A673 (cell line): ENCODE measurements at regions of chr6 and their contacts with region 1.

Region 1: DNA sequence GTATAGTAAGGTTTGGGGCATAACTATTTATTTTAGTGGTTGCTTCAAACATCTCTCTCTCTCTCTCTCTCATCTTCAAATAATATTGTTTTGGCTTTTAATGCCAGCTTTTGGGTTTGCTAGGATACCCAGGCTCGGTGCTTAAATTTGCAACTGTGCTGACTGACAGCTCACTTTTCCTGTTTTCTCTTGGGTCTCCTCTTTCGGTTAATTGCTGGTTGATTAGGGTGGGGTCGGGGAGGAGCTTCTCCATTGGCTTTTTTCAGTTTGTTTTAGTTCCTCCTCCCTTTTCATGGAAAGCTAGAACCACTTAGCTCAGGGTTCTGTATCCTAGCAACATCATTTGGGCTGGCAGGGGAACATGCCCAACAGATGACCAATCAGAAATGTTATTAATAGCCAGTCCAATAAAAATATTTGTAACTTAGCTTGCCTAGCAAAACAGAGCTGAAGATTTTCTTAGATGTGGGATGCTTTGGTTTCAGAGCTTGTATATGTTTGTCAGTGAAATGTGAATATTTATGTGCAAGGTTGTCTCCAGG is 11.3 kb downstream of the TFAP2B start:
- DNase-seq: no peak
- H3K4me3 ChIP-seq: no peak overlapping the region
- H3K27ac ChIP-seq: no peak overlapping the region
- H3K4me1 ChIP-seq: peaks cover 62% of the 10 kb centered on the region
- H3K27me3 ChIP-seq: peaks cover 30% of the 10 kb centered on the region
- CTCF ChIP-seq: no peak

Region 2: DNA sequence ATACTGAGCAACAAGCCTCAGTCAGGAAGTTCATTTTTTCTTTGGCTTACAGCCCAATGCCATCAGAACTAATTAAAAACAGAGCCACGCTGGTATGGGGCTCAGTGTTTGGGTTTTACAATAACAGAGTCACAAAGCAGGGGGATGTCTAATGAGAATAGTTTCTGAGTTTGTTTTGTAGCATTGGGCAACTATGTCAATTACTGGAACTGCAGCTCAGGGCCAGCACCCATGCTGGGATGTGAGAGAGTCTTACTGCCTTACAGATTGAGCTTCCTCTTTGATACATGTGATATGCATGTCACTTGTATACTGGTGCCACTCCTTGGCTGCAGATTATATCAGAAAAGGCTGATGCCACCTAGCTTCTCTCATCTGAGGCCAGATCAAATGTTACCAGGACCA is 106.3 kb after region 1 on chr6:
- CTCF ChIA-PET with region 1: no interaction called
- POLR2A ChIA-PET with region 1: no interaction called
- intact Hi-C with region 1: loop called (anchors 1 kb)
- DNase-seq: peak; percentile 98
- H3K4me3 ChIP-seq: no peak overlapping the region
- H3K27ac ChIP-seq: peak overlapping the region; percentile 63
- H3K4me1 ChIP-seq: peaks cover 44% of the 10 kb centered on the region
- H3K27me3 ChIP-seq: no peaks in the 10 kb centered on the region
- CTCF ChIP-seq: 0 out of 2 replicates have a peak, but pooled peaks have one; percentile 16

Region 3: DNA sequence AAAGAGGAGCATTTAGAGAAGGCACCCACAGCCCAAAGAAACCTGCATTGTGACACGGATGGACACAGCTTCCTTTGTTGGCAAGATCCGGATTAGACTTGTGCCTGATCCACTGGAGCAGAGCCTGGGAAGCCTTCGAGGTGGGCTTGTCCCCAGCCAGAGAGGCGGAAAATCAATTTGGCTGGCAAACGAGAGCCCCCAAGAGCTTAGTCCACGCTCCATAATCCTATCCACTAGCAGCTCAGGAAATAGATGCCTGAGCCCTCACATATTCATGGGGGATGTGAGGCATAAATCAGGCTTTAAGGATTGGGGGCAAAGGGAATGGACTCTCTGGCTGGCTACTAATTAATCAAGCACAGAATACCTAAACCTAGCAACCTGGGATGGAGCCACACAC is 1119.5 kb after region 1 on chr6:
- CTCF ChIA-PET with region 1: no interaction called
- POLR2A ChIA-PET with region 1: no interaction called
- intact Hi-C with region 1: no loop called
- DNase-seq: no peak
- H3K4me3 ChIP-seq: no peak overlapping the region
- H3K27ac ChIP-seq: no peak overlapping the region
- H3K4me1 ChIP-seq: no peaks in the 10 kb centered on the region
- H3K27me3 ChIP-seq: peaks cover 33% of the 10 kb centered on the region
- CTCF ChIP-seq: no peak